Mammary epithelial cell (primary cell): ENCODE measurements at regions of chr2 and their contacts with region 1.

Region 1: GRCh38 chr2:146734042-146734820 is 1110.6 kb upstream of the ACVR2A start:
- DNase-seq: peak; percentile 39
- H3K4me3 ChIP-seq: no peak overlapping the region
- H3K27ac ChIP-seq: no peak overlapping the region
- H3K4me1 ChIP-seq: no peaks in the 10 kb centered on the region
- H3K27me3 ChIP-seq: no peaks in the 10 kb centered on the region
- CTCF ChIP-seq: peak; percentile 56 to 62

Region 2: DNA sequence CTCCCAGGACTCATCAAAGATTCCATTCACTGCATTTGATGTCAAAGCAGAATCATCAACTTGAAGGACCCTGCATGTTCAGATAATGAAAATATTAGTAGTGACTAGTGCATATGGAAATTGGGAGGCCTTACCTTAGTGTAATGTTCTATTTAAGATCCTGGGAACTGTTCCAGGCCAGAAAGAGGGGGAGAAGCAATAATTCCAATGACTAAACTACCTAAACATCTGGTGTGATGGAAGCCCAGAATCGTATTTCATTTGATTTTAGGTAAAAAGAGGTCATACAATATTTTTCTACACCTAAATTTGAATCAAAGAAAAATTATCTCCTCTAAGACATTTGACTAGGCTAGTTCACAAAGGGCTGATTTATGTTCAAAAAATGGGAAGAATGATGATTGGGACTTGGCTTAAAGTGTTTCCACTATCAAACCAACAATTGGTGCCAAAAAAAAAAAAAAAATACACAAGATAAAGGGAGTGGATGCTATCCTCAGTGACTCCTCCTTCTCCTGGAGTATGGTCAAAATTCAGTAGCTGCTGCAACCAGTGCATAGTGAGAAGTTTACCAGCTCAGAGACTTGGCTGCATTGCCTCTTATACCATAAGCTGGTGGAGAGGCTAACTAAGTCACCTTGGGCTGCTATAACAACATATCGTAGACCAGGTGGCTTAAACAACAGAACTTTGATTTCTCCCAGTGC is 72.2 kb after region 1 on chr2:
- CTCF ChIA-PET with region 1: interaction called, 16 read pairs
- dilution Hi-C with region 1: no loop called
- in situ Hi-C with region 1: no loop called
- intact Hi-C with region 1: no loop called
- DNase-seq: peak; percentile 29
- H3K4me3 ChIP-seq: no peak overlapping the region
- H3K27ac ChIP-seq: no peak overlapping the region
- H3K4me1 ChIP-seq: peaks cover 4% of the 10 kb centered on the region
- H3K27me3 ChIP-seq: no peaks in the 10 kb centered on the region
- CTCF ChIP-seq: no peak

Region 3: GRCh38 chr2:146874260-146874658 is 140.0 kb after region 1 on chr2:
- CTCF ChIA-PET with region 1: no interaction called
- dilution Hi-C with region 1: no loop called
- in situ Hi-C with region 1: no loop called
- intact Hi-C with region 1: loop called (anchors 2 kb)
- DNase-seq: peak; percentile 90
- H3K4me3 ChIP-seq: no peak overlapping the region
- H3K27ac ChIP-seq: peak overlapping the region; percentile 25
- H3K4me1 ChIP-seq: peaks cover 25% of the 10 kb centered on the region
- H3K27me3 ChIP-seq: no peaks in the 10 kb centered on the region
- CTCF ChIP-seq: peak in 1 of 2 donors; percentile 23

Region 4: GRCh38 chr2:147045113-147045512 is 310.9 kb after region 1 on chr2:
- CTCF ChIA-PET with region 1: interaction called, 3 read pairs
- dilution Hi-C with region 1: no loop called
- in situ Hi-C with region 1: no loop called
- intact Hi-C with region 1: loop called (anchors 2 kb)
- DNase-seq: peak; percentile 69
- H3K4me3 ChIP-seq: no peak overlapping the region
- H3K27ac ChIP-seq: no peak overlapping the region
- H3K4me1 ChIP-seq: no peaks in the 10 kb centered on the region
- H3K27me3 ChIP-seq: no peaks in the 10 kb centered on the region
- CTCF ChIP-seq: peak; percentile 63 to 78

Region 5: GRCh38 chr2:147331790-147332419 is 597.7 kb after region 1 on chr2:
- CTCF ChIA-PET with region 1: no interaction called
- dilution Hi-C with region 1: no loop called
- in situ Hi-C with region 1: loop called in 1 of 2 experiments (anchors 25 kb)
- intact Hi-C with region 1: loop called (anchors 1 kb)
- DNase-seq: peak; percentile 42
- H3K4me3 ChIP-seq: no peak overlapping the region
- H3K27ac ChIP-seq: no peak overlapping the region
- H3K4me1 ChIP-seq: no peaks in the 10 kb centered on the region
- H3K27me3 ChIP-seq: no peaks in the 10 kb centered on the region
- CTCF ChIP-seq: peak; percentile 61 to 73